Dorsolateral prefrontal cortex (tissue), 120 donors: ENCODE measurements at regions of chr5 and their contacts with region 1.

Region 1: GRCh38 chr5:35656721-35657120 is 39.1 kb downstream of the SPEF2 start:
- DNase-seq: peak in 2 of 10 donors; percentile 36 to 42
- H3K4me3 ChIP-seq: no peak overlapping the region
- H3K27ac ChIP-seq: peak overlapping the region in 27 of 59 donors; percentile 1 to 75 (median 52)
- H3K27me3 ChIP-seq: no peaks in the 10 kb centered on the region
- CTCF ChIP-seq: no peak

Region 2: GRCh38 chr5:35046774-35047173 is 609.9 kb before region 1 on chr5:
- intact Hi-C with region 1: no loop called
- DNase-seq: no peak
- H3K4me3 ChIP-seq: no peak overlapping the region
- H3K27ac ChIP-seq: no peak overlapping the region
- H3K27me3 ChIP-seq: peaks cover 0 to 21% (median 3%) of the 10 kb centered on the region in 45 donors
- CTCF ChIP-seq: no peak

Region 3: DNA sequence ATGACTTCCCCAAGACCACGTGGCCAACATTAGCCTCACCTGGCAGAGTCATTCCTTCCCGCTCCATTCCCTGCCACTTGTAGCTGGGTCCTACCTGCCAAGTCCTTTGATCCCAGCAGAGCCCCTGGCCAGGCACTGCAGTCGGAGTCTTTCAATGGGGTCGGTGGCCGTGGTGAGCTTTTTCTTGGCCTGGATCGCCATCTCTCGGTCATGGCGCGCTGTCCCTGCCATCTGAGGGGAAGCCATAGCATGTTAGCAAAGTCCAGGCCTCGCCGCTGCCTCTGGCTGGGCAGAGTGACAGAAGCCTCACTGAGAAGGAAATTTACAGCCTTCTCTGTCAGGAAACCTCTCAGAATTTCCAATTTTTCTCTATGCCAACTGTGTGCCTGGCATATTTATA is 264.2 kb after region 1 on chr5:
- intact Hi-C with region 1: loop called (anchors 2 to 10 kb)
- DNase-seq: peak in 5 of 10 donors; percentile 37 to 53 (median 49)
- H3K4me3 ChIP-seq: no peak overlapping the region
- H3K27ac ChIP-seq: peak overlapping the region in 2 of 59 donors; percentile 19 to 57
- H3K27me3 ChIP-seq: peaks cover 0 to 8% (median 0%) of the 10 kb centered on the region in 45 donors
- CTCF ChIP-seq: peak in 21 of 56 donors; percentile 8 to 41 (median 23)